Tibial artery (tissue), 4 donors: ENCODE measurements at regions of chr12 and their contacts with region 1.

Region 1: DNA sequence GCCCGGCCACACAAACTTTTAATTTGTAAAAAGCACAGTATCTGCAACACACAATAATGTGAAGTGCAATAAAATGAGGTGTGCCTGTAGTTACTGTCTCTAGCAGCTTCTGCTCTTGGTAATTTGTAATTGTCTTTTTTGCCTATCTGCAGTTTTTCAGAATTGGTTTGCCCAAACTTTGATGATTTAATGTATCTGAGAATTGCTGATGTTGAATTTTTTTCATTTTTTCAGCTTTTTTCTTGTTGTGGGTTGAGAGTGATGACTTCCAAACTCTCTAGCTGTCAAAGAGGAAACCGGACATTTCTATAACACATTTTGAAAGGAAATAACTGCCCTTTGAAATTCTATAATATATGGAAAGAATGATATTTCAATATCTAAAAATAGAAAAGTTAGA is 236.9 kb downstream of the RERGL start:
- DNase-seq: no peak
- H3K4me3 ChIP-seq: no peak overlapping the region
- H3K27ac ChIP-seq: no peak overlapping the region
- H3K4me1 ChIP-seq: no peaks in the 10 kb centered on the region
- H3K27me3 ChIP-seq: no peaks in the 10 kb centered on the region
- CTCF ChIP-seq: no peak

Region 2: DNA sequence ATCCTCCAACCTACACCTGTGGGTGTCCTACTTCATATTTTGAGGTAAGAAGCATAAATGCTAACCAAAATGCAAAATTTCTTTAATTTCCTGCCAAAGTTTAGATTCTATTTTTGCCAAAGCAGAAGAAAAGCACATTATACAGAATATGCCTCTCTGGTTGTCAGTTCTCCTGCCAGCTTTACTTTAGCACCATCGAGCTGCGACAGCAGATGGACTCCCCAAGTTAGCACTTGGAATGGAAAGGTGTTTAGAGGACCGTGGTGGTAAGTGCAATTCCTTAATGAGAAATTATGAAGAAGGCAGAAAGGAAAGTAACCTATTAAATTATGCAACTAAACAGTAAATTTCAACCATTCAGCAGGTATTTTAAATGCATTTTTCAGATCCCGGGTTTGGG is 89.7 kb before region 1 on chr12:
- intact Hi-C with region 1: loop called (anchors 5 kb)
- DNase-seq: no peak
- H3K4me3 ChIP-seq: no peak overlapping the region
- H3K27ac ChIP-seq: no peak overlapping the region
- H3K4me1 ChIP-seq: no peaks in the 10 kb centered on the region
- H3K27me3 ChIP-seq: no peaks in the 10 kb centered on the region
- CTCF ChIP-seq: no peak